Activated B cell treated with CpG ODN at 0.5 μM for 24 hours (primary cell): ENCODE measurements at regions of chr17 and their contacts with region 1.

Region 1: GRCh38 chr17:7239091-7240027 is at the start of gene PHF23:
- DNase-seq: peak; percentile 93
- ATAC-seq: peak; percentile 64
- H3K4me3 Mint-ChIP-seq: peak within 1 kb of the TSS; percentile 99
- H3K27ac Mint-ChIP-seq: peak within 1 kb of the TSS; percentile 100
- H3K4me1 Mint-ChIP-seq: peaks cover 63% of the 10 kb centered on the region
- H3K27me3 Mint-ChIP-seq: no peaks in the 10 kb centered on the region
- CTCF ChIP-seq: no peak
- total RNA-seq, gene PHF23: 45.5 and 46.6 TPM in 2 replicates

Region 2: DNA sequence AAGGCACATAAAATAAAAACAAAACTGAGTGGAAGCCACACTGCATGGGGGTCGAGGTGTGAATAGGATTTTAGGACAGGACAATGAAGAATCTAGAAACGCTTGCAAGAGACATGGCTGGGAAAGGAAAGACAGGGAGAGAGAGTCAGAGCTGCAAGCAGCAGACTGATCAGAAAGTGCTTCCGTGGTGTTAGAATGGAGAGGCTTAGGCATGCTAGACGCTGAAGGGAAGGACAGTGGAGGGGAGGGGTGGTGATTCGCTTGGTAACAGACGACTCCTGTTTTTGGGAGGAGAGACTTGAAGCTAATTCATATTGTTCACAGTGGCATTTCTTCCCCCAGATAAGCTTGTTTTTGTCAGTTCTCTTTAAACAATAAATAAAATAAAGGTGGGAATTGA is 977.9 kb before region 1 on chr17:
- CTCF ChIA-PET with region 1: no interaction called
- POLR2A ChIA-PET with region 1: no interaction called
- intact Hi-C with region 1: no loop called
- DNase-seq: no peak
- ATAC-seq: no peak
- H3K4me3 Mint-ChIP-seq: no peak overlapping the region
- H3K27ac Mint-ChIP-seq: no peak overlapping the region
- H3K4me1 Mint-ChIP-seq: no peaks in the 10 kb centered on the region
- H3K27me3 Mint-ChIP-seq: peaks cover 27% of the 10 kb centered on the region
- CTCF ChIP-seq: no peak

Region 3: DNA sequence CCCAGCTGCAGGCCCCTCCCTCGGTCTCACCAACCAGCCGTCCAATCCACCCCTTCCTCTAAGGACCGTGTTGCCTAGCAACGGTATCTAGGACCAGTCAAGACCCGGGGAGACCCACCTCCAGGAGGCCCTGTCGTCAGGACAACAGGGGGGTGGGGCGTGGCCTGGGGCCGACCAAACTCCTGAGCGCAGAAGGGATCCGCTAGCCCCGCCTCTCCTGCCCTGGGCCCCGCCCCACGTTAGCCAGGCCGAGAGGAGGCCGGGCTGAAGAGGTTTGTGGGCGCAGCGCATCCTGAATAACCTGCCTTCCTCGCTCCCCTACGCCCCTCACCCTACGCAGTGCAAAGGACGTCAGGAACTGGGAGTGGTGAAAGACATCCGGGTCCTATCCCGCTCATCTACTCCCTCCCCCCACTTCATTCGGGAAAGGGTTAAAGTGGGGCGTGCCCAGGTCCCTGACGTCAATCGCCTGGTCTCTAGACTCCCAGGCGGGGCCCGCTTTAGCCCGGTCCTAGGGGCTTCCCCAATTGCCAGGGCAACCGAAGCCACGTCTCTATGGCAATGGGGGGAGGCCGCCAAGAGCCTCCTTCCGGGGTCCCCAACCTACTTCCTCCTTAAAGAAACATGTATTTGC is 34.4 kb before region 1 on chr17:
- CTCF ChIA-PET with region 1: interaction called, 3 read pairs
- POLR2A ChIA-PET with region 1: interaction called, 12 read pairs
- intact Hi-C with region 1: loop called (anchors 1 kb)
- DNase-seq: peak; percentile 95
- ATAC-seq: peak; percentile 88
- H3K4me3 Mint-ChIP-seq: peak overlapping the region; percentile 87
- H3K27ac Mint-ChIP-seq: peak overlapping the region; percentile 94
- H3K4me1 Mint-ChIP-seq: peaks cover 30% of the 10 kb centered on the region
- H3K27me3 Mint-ChIP-seq: no peaks in the 10 kb centered on the region
- CTCF ChIP-seq: no peak

Region 4: DNA sequence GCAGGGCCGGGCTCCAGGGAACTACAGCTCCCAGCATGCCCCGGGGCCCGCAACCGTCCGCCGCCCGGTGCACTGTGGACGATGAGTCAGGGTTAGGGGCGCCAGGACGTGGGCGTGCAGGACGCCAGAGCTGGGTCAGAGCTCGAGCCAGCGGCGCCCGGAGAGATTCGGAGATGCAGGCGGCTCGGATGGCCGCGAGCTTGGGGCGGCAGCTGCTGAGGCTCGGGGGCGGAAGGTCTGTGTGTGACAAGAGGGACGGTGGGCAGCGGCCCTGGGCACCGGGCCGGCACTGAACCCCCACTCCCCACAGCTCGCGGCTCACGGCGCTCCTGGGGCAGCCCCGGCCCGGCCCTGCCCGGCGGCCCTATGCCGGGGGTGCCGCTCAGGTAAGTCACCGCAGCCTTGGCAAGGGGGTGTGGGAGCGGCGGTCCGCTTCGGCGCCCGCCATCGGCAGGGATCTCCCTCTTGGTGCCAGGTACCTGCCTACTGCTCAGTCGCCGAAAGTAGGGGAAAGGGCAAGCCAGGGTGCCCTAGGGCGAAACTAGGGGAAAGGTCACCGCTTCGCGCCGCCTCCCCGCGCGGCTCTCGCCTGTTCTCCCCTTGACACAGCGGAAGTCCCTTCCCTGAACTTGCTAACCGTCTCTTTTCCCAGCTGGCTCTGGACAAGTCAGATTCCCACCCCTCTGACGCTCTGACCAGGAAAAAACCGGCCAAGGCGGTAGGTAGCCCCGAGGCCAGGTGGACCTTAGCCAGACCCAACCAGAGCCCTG is 19.4 kb before region 1 on chr17 and contains the starts of genes ACADVL and DLG4:
- CTCF ChIA-PET with region 1: interaction called, 8 read pairs
- POLR2A ChIA-PET with region 1: interaction called, 245 read pairs
- intact Hi-C with region 1: loop called (anchors 1 kb)
- DNase-seq: peak; percentile 75
- ATAC-seq: peak; percentile 75
- H3K4me3 Mint-ChIP-seq: peak within 1 kb of the TSS; percentile 96
- H3K27ac Mint-ChIP-seq: peak within 1 kb of the TSS; percentile 91
- H3K4me1 Mint-ChIP-seq: peaks cover 53% of the 10 kb centered on the region
- H3K27me3 Mint-ChIP-seq: no peaks in the 10 kb centered on the region
- CTCF ChIP-seq: no peak
- total RNA-seq, gene ACADVL: 438 and 469 TPM in 2 replicates
- total RNA-seq, gene DLG4: 3.9 and 5.0 TPM in 2 replicates

Region 5: GRCh38 chr17:7329374-7329996 is 90.1 kb after region 1 on chr17:
- CTCF ChIA-PET with region 1: no interaction called
- POLR2A ChIA-PET with region 1: interaction called, 7 read pairs
- intact Hi-C with region 1: loop called (anchors 2 kb)
- DNase-seq: peak; percentile 92
- ATAC-seq: peak; percentile 74
- H3K4me3 Mint-ChIP-seq: peak overlapping the region; percentile 95
- H3K27ac Mint-ChIP-seq: peak overlapping the region; percentile 96
- H3K4me1 Mint-ChIP-seq: peaks cover 41% of the 10 kb centered on the region
- H3K27me3 Mint-ChIP-seq: no peaks in the 10 kb centered on the region
- CTCF ChIP-seq: no peak

Region 6: GRCh38 chr17:7403977-7404736 is 164.8 kb after region 1 on chr17 and contains the start of gene TMEM256:
- CTCF ChIA-PET with region 1: no interaction called
- POLR2A ChIA-PET with region 1: interaction called, 22 read pairs
- intact Hi-C with region 1: no loop called
- DNase-seq: peak; percentile 82
- ATAC-seq: peak; percentile 89
- H3K4me3 Mint-ChIP-seq: peak within 1 kb of the TSS; percentile 97
- H3K27ac Mint-ChIP-seq: peak within 1 kb of the TSS; percentile 94
- H3K4me1 Mint-ChIP-seq: peaks cover 16% of the 10 kb centered on the region
- H3K27me3 Mint-ChIP-seq: peaks cover 12% of the 10 kb centered on the region
- CTCF ChIP-seq: no peak
- total RNA-seq, gene TMEM256: 98.2 and 117 TPM in 2 replicates

Region 7: DNA sequence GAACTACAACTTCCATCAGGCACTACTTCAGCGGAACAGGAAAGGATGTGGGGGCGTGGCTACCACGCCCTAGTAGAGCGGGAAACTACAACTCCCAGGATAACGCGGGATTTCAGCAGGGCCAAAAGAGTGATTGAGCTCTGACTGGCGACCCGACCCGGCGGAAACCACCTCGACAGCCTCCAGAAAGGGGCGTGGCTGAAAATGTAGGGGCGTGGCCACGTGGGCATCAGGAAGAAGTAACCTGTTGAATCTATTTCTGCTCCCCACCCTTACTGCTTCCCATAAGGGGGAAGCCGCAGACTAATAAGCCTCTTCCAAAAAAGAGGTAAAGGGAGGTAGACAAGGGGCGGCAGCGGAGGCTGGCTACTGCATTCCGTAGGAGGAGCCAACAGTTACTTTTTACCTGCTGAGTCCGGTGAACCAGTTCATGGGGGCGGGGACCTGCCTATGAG is 195.9 kb after region 1 on chr17 and contains the start of gene TMEM102:
- CTCF ChIA-PET with region 1: no interaction called
- POLR2A ChIA-PET with region 1: no interaction called
- intact Hi-C with region 1: no loop called
- DNase-seq: peak; percentile 95
- ATAC-seq: peak; percentile 87
- H3K4me3 Mint-ChIP-seq: peak within 1 kb of the TSS; percentile 94
- H3K27ac Mint-ChIP-seq: peak within 1 kb of the TSS; percentile 93
- H3K4me1 Mint-ChIP-seq: peaks cover 45% of the 10 kb centered on the region
- H3K27me3 Mint-ChIP-seq: peaks cover 15% of the 10 kb centered on the region
- CTCF ChIP-seq: no peak
- total RNA-seq, gene TMEM102: 13.4 and 14.8 TPM in 2 replicates